GM12878 (cell line): ENCODE measurements at regions of chr19 and their contacts with region 1.

Region 1: DNA sequence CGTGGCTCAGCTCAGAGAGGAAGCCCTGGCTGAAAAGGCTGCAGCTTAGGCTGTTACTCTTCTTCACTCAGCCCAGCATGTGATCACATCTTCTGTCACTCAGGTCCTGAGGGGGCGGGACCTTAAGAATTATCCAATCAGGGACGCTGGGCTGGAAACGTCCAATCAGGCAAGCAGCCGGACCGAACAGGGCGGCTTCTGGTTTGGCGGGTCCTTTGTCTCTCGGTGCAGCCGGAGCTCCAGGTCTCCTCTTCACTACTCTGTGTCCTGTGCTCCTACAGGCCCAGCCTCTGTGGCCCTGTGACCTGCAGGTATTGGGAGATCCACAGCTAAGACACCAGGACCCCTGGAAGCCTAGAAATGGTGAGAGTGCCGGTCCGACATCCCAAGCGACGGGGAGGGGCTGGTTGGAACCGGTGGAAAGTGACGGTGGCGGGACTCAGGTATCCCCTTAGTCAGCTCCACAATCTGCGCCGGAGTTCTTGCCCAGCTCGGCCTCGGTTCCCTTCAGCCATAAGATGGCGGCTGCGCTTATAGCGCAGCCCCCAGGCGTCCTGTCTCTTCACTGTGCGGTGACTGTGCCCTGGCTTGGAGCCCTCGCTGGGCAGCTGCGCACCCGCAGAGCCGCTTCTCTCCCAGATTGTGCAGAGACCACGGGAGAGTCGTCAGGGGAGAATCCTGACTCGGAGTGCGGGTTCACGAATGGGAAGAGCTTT is at the start of gene ZNF93:
- DNase-seq: peak; percentile 88
- ATAC-seq: peak; percentile 95
- H3K4me3 ChIP-seq: peak within 1 kb of the TSS; percentile 70
- H3K27ac ChIP-seq: peak within 1 kb of the TSS; percentile 78
- H3K4me1 ChIP-seq: no peaks in the 10 kb centered on the region
- H3K27me3 ChIP-seq: no peaks in the 10 kb centered on the region
- CTCF ChIP-seq: no peak
- EP300 ChIP-seq: no peak
- POLR2A ChIP-seq: peak; percentile 77
- RAD21 ChIP-seq: no peak
- polyA plus RNA-seq, gene ZNF93: 1.4 to 1.9 TPM

Region 2: GRCh38 chr19:19606021-19606420 is 294.9 kb before region 1 on chr19:
- CTCF ChIA-PET with region 1: no interaction called
- POLR2A ChIA-PET with region 1: no interaction called
- RAD21 ChIA-PET with region 1: no interaction called
- SMC1A ChIA-PET with region 1: no interaction called
- in situ Hi-C with region 1: no loop called
- intact Hi-C with region 1: no loop called
- DNase-seq: no peak
- ATAC-seq: peak; percentile 64
- H3K4me3 ChIP-seq: no peak overlapping the region
- H3K27ac ChIP-seq: peak overlapping the region; percentile 35; the same call in 1 of the 2 replicates
- H3K4me1 ChIP-seq: peaks cover 14% of the 10 kb centered on the region
- H3K27me3 ChIP-seq: no peaks in the 10 kb centered on the region
- CTCF ChIP-seq: no peak
- EP300 ChIP-seq: no peak
- POLR2A ChIP-seq: no peak
- RAD21 ChIP-seq: no peak

Region 3: GRCh38 chr19:19776041-19777008 is 124.6 kb before region 1 on chr19:
- CTCF ChIA-PET with region 1: interaction called, 4 read pairs
- POLR2A ChIA-PET with region 1: interaction called, 12 read pairs
- RAD21 ChIA-PET with region 1: interaction called, 8 read pairs
- SMC1A ChIA-PET with region 1: interaction called, 4 read pairs
- in situ Hi-C with region 1: no loop called
- intact Hi-C with region 1: no loop called
- DNase-seq: peak; percentile 96
- ATAC-seq: peak; percentile 99
- H3K4me3 ChIP-seq: peak overlapping the region; percentile 78
- H3K27ac ChIP-seq: peak overlapping the region; percentile 68
- H3K4me1 ChIP-seq: no peaks in the 10 kb centered on the region
- H3K27me3 ChIP-seq: no peaks in the 10 kb centered on the region
- CTCF ChIP-seq: peak in 1 of 3 experiments; percentile 8; a peak in 1 of 6 replicates
- EP300 ChIP-seq: no peak
- POLR2A ChIP-seq: peak; percentile 77
- RAD21 ChIP-seq: no peak

Region 4: GRCh38 chr19:19821366-19821951 is 79.4 kb before region 1 on chr19 and contains the start of gene ZNF506:
- CTCF ChIA-PET with region 1: interaction called, 4 read pairs
- POLR2A ChIA-PET with region 1: interaction called, 10 read pairs
- RAD21 ChIA-PET with region 1: interaction called, 5 read pairs
- SMC1A ChIA-PET with region 1: interaction called, 7 read pairs
- in situ Hi-C with region 1: no loop called
- intact Hi-C with region 1: loop called (anchors 5 kb)
- DNase-seq: peak; percentile 70
- ATAC-seq: peak; percentile 96
- H3K4me3 ChIP-seq: peak within 1 kb of the TSS; percentile 90
- H3K27ac ChIP-seq: peak within 1 kb of the TSS; percentile 96
- H3K4me1 ChIP-seq: peaks cover 2% of the 10 kb centered on the region; the same call in 1 of the 2 replicates
- H3K27me3 ChIP-seq: no peaks in the 10 kb centered on the region
- CTCF ChIP-seq: no peak
- EP300 ChIP-seq: no peak
- POLR2A ChIP-seq: peak; percentile 97
- RAD21 ChIP-seq: no peak
- polyA plus RNA-seq, gene ZNF506: 3.5 to 4.0 TPM

Region 5: DNA sequence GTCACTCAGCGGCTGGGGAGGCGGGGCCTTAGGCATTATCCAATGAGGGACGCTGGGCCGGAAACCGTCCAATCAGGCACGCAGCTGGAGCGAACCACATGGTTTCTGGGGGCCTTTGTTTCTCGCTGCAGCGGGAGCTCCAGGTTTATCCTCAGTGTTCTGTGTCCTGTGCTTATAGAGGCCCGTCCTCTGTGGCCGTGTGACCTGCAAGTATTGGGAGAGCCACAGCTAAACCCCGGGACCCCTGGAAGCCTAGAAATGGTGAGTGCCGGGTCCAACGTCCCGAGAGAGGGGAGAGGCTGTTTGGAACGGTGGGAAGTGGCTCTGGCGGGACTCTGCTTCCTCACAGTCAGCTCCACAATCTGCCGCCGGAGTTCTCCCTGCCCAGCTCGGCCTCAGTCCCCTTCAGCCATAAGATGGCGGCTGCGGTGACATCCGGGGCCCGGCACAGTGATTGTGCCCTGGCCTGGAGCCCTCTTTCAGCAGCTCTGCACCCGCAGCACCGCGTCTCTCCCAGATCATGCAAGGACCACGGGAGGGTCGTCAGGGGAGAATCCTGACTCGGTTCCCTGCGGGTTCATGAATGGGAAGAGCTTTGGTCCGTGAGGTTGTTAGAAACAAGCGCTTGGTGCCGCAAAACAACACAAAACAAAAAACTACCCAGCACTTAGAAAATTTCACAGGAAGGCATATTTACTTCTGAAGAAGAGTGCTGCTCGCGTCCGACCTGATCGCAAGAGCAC is 35.0 kb before region 1 on chr19 and contains the start of gene ZNF253:
- CTCF ChIA-PET with region 1: interaction called, 7 read pairs
- POLR2A ChIA-PET with region 1: interaction called, 30 read pairs
- RAD21 ChIA-PET with region 1: interaction called, 24 read pairs
- SMC1A ChIA-PET with region 1: interaction called, 31 read pairs
- in situ Hi-C with region 1: no loop called
- intact Hi-C with region 1: no loop called
- DNase-seq: peak; percentile 83
- ATAC-seq: peak; percentile 96
- H3K4me3 ChIP-seq: peak within 1 kb of the TSS; percentile 85
- H3K27ac ChIP-seq: peak within 1 kb of the TSS; percentile 96
- H3K4me1 ChIP-seq: no peaks in the 10 kb centered on the region
- H3K27me3 ChIP-seq: no peaks in the 10 kb centered on the region
- CTCF ChIP-seq: no peak
- EP300 ChIP-seq: no peak
- POLR2A ChIP-seq: peak; percentile 91
- RAD21 ChIP-seq: no peak
- polyA plus RNA-seq, gene ZNF253: 2.6 to 3.3 TPM

Region 6: DNA sequence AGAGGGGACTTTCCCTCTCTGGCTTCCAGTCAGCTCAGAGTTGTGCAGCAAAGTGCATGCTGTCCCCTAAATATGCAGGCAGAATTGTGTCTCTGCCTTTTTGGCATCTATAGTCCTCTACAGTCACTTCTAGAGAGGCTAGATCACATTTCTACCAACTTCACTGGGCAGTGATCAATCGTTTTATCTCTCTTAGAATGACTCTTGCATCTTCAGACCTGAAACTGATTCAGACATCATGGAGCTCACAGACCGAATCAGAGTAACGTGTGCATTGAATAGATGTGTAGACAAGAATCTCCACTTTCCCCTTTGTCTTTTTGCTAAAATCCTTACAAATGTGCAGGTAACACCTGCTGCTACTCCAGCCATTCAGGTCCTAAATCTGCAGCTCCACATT is 29.0 kb before region 1 on chr19:
- CTCF ChIA-PET with region 1: interaction called, 7 read pairs
- POLR2A ChIA-PET with region 1: interaction called, 30 read pairs
- RAD21 ChIA-PET with region 1: interaction called, 24 read pairs
- SMC1A ChIA-PET with region 1: interaction called, 31 read pairs
- in situ Hi-C with region 1: no loop called
- intact Hi-C with region 1: no loop called
- DNase-seq: no peak
- ATAC-seq: no peak
- H3K4me3 ChIP-seq: no peak overlapping the region
- H3K27ac ChIP-seq: no peak overlapping the region
- H3K4me1 ChIP-seq: no peaks in the 10 kb centered on the region
- H3K27me3 ChIP-seq: no peaks in the 10 kb centered on the region
- CTCF ChIP-seq: no peak
- EP300 ChIP-seq: no peak
- POLR2A ChIP-seq: no peak
- RAD21 ChIP-seq: no peak

Region 7: DNA sequence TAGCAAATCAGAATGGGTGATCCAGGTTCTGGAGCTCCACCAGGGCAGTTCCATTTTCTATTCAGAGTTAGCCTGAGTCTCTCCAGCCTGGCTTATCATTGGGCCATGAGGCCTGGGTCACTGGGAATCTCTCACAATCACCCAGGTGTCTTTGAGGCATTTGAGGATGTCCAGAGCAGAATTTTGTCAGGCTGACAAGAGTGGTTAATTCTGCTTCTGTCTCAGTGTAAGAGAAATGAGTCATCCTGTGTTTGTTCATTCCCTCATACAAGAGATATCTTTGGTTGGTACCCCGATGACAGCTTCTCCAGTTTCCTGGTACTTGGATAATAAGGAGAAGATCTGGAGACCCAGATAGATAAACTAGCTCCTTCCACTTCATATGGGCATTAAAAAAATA is 10.3 kb after region 1 on chr19:
- CTCF ChIA-PET with region 1: interaction called, 3 read pairs
- POLR2A ChIA-PET with region 1: interaction called, 4 read pairs
- RAD21 ChIA-PET with region 1: interaction called, 6 read pairs
- SMC1A ChIA-PET with region 1: interaction called, 10 read pairs
- in situ Hi-C with region 1: no loop called
- intact Hi-C with region 1: no loop called
- DNase-seq: no peak
- ATAC-seq: no peak
- H3K4me3 ChIP-seq: no peak overlapping the region
- H3K27ac ChIP-seq: no peak overlapping the region
- H3K4me1 ChIP-seq: no peaks in the 10 kb centered on the region
- H3K27me3 ChIP-seq: no peaks in the 10 kb centered on the region
- CTCF ChIP-seq: no peak
- EP300 ChIP-seq: no peak
- POLR2A ChIP-seq: no peak
- RAD21 ChIP-seq: no peak